MCF 10A (cell line): ENCODE measurements at regions of chr11 and their contacts with region 1.

Region 1: DNA sequence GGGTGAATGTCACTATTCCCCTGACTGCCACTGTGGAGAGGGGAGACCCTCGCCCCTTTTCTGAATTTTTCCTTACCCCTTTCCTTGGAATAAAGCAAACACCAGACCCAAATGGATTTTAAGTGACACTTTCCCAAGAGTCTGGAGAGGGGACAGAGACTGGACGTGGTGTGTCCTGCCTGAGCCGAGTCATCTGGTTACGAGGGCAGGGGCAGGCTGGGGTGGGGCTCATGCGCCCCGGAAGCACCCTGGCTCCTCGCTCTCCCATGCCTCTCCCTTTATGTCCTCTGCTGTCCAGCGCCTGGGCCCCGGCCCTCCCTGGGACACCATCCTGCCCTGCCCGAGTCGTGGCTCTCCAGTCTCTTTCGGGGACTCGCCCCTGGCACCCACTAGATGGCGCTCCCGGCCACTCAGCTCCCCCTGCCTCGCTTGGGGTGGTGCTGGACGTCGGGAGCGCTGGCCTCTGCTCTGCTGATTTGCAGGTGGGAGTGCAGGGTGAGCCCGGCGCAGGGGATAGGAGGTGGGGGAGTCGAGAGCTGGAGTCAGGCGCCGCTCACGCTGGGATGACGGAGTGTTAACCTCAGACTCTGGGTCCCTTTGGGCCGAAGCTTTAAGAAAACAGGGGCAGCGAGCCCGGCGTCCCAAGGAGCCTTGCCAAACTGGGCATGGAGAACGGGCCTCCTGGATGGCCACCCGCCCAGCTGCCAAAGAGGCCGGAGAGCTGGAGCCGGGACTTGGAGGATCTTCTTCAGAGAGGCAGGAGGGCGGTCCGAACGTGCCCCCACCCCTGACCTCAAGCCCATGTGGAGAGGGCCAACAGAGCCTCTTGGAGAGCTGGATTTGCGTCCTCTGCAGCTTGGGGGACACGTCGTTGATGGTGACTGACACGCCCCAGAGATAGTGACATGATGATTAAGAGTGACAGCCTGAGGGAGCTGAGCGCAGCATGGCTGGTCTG is 89.9 kb downstream of the RPS6KA4 start:
- DNase-seq: peak; percentile 81
- H3K4me3 Mint-ChIP-seq: peak overlapping the region; percentile 53
- H3K27ac Mint-ChIP-seq: no peak overlapping the region
- H3K4me1 Mint-ChIP-seq: peaks cover 7% of the 10 kb centered on the region
- H3K27me3 Mint-ChIP-seq: peaks cover 49% of the 10 kb centered on the region
- CTCF ChIP-seq: peak; percentile 83

Region 2: GRCh38 chr11:64304316-64305072 is 144.4 kb before region 1 on chr11:
- CTCF ChIA-PET with region 1: no interaction called
- POLR2A ChIA-PET with region 1: no interaction called
- intact Hi-C with region 1: no loop called
- DNase-seq: peak; percentile 92
- H3K4me3 Mint-ChIP-seq: peak overlapping the region; percentile 99
- H3K27ac Mint-ChIP-seq: peak overlapping the region; percentile 83
- H3K4me1 Mint-ChIP-seq: peaks cover 18% of the 10 kb centered on the region
- H3K27me3 Mint-ChIP-seq: no peaks in the 10 kb centered on the region
- CTCF ChIP-seq: peak; percentile 78

Region 3: DNA sequence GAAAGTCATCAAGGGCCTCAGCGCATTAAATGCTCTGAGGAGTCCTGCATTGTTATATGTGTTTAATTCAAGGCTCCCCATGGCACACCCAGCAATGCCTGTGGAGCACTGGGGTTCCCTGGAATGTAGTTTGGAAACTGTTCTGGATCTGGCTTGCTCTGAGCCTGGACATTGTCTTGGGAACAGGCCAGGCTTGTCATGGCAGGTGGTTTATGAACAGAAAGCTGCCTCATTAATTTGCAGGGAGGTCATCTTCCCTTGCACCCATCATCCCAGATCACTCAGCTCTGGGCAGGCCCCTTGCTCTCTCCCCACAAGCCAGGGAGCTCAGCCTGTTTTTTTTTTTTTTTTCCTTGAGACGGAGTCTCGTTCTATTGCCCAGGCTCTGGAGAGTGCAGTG is 57.0 kb before region 1 on chr11:
- CTCF ChIA-PET with region 1: interaction called, 13 read pairs
- POLR2A ChIA-PET with region 1: no interaction called
- intact Hi-C with region 1: no loop called
- DNase-seq: no peak
- H3K4me3 Mint-ChIP-seq: no peak overlapping the region
- H3K27ac Mint-ChIP-seq: no peak overlapping the region
- H3K4me1 Mint-ChIP-seq: peaks cover 2% of the 10 kb centered on the region
- H3K27me3 Mint-ChIP-seq: peaks cover 25% of the 10 kb centered on the region
- CTCF ChIP-seq: no peak

Region 4: GRCh38 chr11:64436000-64436399 is 12.9 kb before region 1 on chr11:
- CTCF ChIA-PET with region 1: interaction called, 49 read pairs
- POLR2A ChIA-PET with region 1: no interaction called
- intact Hi-C with region 1: no loop called
- DNase-seq: peak; percentile 13
- H3K4me3 Mint-ChIP-seq: no peak overlapping the region
- H3K27ac Mint-ChIP-seq: no peak overlapping the region
- H3K4me1 Mint-ChIP-seq: peaks cover 7% of the 10 kb centered on the region
- H3K27me3 Mint-ChIP-seq: peaks cover 29% of the 10 kb centered on the region
- CTCF ChIP-seq: no peak

Region 5: DNA sequence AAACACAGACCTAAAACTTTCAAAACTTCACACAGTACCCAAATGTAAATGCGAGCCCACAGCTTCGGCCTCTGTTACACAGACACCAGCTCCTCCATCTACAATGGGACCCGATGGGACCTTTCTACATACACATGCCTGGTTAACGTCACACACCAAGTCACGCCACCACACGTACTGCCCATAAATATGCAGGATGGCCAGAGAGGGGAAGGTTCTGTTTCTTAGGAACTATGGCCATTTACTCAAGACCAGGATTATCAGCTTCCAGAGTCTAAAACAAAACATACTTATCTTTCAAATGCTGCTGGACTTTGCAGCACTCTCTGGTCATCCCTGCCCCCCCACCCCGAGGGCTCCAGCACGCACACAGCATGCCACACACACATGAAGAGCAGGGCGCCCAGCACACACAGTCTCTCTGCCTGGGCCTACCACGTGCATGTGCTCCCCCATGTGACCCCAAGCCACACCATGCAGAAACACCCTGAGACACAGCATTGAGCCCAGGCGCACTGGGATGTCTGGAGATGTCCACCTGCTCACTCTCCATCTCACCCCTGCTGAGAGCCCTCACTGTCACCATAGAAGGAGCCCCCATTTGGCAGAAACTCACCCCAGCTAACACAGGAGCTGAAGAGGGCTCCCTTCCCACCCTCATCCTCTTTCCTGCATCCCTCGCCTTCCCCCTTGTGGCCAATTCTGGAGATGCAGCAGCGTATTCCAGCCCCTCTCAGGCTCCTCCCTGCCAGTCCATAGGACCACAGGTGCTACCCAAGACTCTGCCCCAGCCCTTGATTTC is 203.9 kb after region 1 on chr11:
- CTCF ChIA-PET with region 1: interaction called, 167 read pairs
- POLR2A ChIA-PET with region 1: interaction called, 4 read pairs
- intact Hi-C with region 1: loop called (anchors 1 kb)
- DNase-seq: peak; percentile 74
- H3K4me3 Mint-ChIP-seq: no peak overlapping the region
- H3K27ac Mint-ChIP-seq: no peak overlapping the region
- H3K4me1 Mint-ChIP-seq: no peaks in the 10 kb centered on the region
- H3K27me3 Mint-ChIP-seq: no peaks in the 10 kb centered on the region
- CTCF ChIP-seq: peak; percentile 97

Region 6: DNA sequence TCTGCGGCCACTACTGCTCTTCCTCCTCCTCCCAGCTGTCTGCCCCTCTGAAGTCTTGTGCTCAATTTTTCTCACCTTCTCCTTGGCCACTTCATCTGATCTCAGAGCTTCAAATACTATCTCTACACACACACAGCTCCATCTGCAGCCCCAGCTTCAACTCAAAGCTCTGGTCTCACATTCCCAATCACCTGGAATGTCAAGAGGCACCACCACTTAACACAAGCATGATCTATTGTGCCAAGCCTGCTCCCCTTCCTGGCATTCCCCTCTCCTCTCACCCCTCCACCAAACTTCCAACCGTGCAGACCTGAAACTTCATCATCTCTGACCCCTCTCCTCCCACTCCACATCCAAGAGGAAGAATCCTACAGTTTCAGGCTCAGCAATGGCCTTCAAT is 256.6 kb after region 1 on chr11:
- CTCF ChIA-PET with region 1: interaction called, 17 read pairs
- POLR2A ChIA-PET with region 1: no interaction called
- intact Hi-C with region 1: no loop called
- DNase-seq: no peak
- H3K4me3 Mint-ChIP-seq: no peak overlapping the region
- H3K27ac Mint-ChIP-seq: no peak overlapping the region
- H3K4me1 Mint-ChIP-seq: no peaks in the 10 kb centered on the region
- H3K27me3 Mint-ChIP-seq: peaks cover 60% of the 10 kb centered on the region
- CTCF ChIP-seq: no peak

Region 7: DNA sequence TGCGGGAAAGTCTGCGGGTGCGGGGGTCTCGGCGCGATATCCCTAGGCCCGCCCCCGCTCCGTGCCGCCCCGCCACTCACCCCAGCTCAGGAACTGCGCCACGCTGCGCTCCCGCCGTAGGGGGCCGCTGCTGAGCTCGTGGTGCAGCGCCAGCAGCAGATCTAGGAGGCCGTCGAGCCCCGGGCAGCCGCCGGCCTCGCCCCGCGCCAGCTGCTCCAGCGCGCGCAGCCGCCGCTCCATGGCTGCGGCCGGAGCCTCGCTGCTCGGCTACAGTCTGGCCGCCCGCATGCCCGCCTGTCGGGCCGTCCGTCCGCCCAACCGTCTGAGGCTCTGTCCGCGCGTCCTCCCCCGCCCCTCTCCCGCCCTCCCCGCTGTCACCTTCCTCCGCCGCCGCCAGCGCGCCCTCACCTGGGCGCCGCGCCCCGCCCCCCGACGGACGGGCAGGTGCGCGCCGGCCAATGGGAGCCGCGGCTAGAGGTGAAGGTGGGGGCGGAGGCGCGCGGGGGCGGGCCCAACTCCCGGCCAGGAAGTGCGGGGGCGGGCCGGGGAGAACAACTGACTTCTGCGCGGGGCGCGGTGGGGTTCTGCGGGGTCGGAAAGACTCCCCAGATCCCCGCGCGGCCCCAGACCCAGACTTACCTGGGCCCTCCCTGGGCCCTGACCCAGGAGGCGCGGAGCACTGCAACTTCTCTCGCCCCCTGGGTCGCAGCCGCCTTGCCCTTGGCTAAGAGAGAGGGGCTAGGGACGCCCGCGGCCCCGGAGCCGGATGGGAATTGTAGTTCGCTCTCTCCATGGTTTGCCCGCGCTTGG is 395.7 kb after region 1 on chr11 and contains the start of gene CDC42BPG:
- CTCF ChIA-PET with region 1: no interaction called
- POLR2A ChIA-PET with region 1: no interaction called
- intact Hi-C with region 1: no loop called
- DNase-seq: peak; percentile 81
- H3K4me3 Mint-ChIP-seq: peak within 1 kb of the TSS; percentile 77
- H3K27ac Mint-ChIP-seq: peak within 1 kb of the TSS; percentile 29
- H3K4me1 Mint-ChIP-seq: peaks cover 33% of the 10 kb centered on the region
- H3K27me3 Mint-ChIP-seq: no peaks in the 10 kb centered on the region
- CTCF ChIP-seq: peak; percentile 64
- total RNA-seq, gene CDC42BPG: 3.0 and 3.7 TPM in 2 replicates